Mammary epithelial cell (primary cell): ENCODE measurements at regions of chr5 and their contacts with region 1.

Region 1: GRCh38 chr5:16574789-16575721 is 41.7 kb downstream of the RETREG1 start:
- DNase-seq: peak; percentile 89
- H3K4me3 ChIP-seq: no peak overlapping the region
- H3K27ac ChIP-seq: peak overlapping the region; percentile 54
- H3K4me1 ChIP-seq: peaks cover 22% of the 10 kb centered on the region
- H3K27me3 ChIP-seq: no peaks in the 10 kb centered on the region
- CTCF ChIP-seq: no peak

Region 2: DNA sequence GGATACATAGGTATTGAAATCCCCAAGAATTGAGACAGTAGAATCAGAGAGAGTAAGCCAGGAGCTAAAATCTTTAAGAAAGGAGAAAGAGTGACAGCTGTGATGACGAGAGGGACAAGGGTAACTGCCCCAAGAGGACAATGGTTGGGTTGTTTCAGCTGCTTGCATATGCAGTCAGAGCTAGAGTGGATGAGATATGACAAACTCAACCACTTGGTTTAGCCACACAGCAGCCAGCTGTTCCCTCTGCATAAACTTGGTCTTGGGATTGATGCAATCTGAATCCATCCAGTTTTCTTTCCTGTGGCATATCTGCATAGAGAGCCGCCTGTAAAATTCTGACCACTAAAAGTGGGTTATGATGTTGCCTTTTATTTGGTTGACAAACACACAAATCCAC is 210.1 kb before region 1 on chr5:
- CTCF ChIA-PET with region 1: no interaction called
- dilution Hi-C with region 1: no loop called
- in situ Hi-C with region 1: no loop called
- intact Hi-C with region 1: no loop called
- DNase-seq: no peak
- H3K4me3 ChIP-seq: no peak overlapping the region
- H3K27ac ChIP-seq: no peak overlapping the region
- H3K4me1 ChIP-seq: no peaks in the 10 kb centered on the region
- H3K27me3 ChIP-seq: no peaks in the 10 kb centered on the region
- CTCF ChIP-seq: no peak

Region 3: GRCh38 chr5:16437974-16438373 is 137.1 kb before region 1 on chr5:
- CTCF ChIA-PET with region 1: no interaction called
- dilution Hi-C with region 1: no loop called
- in situ Hi-C with region 1: no loop called
- intact Hi-C with region 1: no loop called
- DNase-seq: no peak
- H3K4me3 ChIP-seq: no peak overlapping the region
- H3K27ac ChIP-seq: no peak overlapping the region
- H3K4me1 ChIP-seq: no peaks in the 10 kb centered on the region
- H3K27me3 ChIP-seq: no peaks in the 10 kb centered on the region
- CTCF ChIP-seq: peak; percentile 10 to 22

Region 4: GRCh38 chr5:16626663-16627264 is 51.7 kb after region 1 on chr5:
- CTCF ChIA-PET with region 1: no interaction called
- dilution Hi-C with region 1: loop called (anchors 5 kb)
- in situ Hi-C with region 1: no loop called
- intact Hi-C with region 1: no loop called
- DNase-seq: no peak
- H3K4me3 ChIP-seq: no peak overlapping the region
- H3K27ac ChIP-seq: no peak overlapping the region
- H3K4me1 ChIP-seq: no peaks in the 10 kb centered on the region
- H3K27me3 ChIP-seq: peaks cover 4% of the 10 kb centered on the region
- CTCF ChIP-seq: no peak

Region 5: DNA sequence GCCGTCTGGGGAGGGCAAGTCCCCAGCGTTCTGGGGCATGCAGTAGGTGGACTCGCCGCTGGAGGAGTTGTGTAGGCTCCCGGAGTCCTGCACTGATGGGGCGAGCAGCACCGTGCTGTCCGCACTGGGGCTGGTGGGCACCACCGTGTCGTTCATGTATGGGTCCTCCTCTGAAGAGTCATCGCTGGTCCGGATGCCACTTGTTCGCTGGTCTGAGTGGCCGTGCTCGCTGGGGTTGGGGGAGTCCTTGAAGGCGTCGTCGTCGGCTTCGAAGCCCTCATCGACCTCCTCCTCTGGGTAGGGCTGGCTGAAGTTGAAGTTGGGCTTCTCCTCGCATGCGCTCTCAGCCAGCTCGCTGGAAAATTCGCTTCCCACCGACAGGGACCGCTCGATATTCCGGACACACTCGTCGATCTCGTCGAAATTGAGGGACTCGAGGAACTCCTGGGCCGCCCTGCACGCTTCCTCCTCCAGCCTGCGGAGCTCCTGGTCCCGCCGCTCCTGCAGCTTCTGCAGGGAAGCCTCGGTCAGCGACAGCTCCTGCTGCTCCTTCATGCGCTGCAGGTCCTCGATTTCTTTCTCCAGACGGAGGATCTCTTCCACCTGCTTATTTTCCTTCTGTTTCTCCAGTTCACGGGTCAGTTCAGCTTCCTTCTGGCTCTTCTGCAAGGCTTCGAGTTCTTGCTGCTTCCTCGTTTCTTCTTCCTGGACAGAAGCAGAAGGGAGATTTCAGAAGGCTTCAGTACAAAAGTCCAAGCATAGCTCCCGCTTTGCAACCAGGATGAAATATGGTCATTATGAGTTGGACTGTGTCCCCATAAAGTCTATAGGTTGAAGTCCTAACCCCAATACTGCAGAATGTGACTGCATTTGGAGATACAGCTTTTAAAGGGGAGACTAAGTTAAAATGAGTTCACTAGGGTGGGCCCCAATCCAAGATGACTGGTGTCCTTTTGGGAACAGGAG is 126.4 kb after region 1 on chr5:
- CTCF ChIA-PET with region 1: no interaction called
- dilution Hi-C with region 1: no loop called
- in situ Hi-C with region 1: no loop called
- intact Hi-C with region 1: no loop called
- DNase-seq: no peak
- H3K4me3 ChIP-seq: no peak overlapping the region
- H3K27ac ChIP-seq: no peak overlapping the region
- H3K4me1 ChIP-seq: peaks cover under 1% of the 10 kb centered on the region
- H3K27me3 ChIP-seq: no peaks in the 10 kb centered on the region
- CTCF ChIP-seq: no peak